Posterior cingulate gyrus (tissue), 11 donors: ENCODE measurements at regions of chr18 and their contacts with region 1.

Region 1: DNA sequence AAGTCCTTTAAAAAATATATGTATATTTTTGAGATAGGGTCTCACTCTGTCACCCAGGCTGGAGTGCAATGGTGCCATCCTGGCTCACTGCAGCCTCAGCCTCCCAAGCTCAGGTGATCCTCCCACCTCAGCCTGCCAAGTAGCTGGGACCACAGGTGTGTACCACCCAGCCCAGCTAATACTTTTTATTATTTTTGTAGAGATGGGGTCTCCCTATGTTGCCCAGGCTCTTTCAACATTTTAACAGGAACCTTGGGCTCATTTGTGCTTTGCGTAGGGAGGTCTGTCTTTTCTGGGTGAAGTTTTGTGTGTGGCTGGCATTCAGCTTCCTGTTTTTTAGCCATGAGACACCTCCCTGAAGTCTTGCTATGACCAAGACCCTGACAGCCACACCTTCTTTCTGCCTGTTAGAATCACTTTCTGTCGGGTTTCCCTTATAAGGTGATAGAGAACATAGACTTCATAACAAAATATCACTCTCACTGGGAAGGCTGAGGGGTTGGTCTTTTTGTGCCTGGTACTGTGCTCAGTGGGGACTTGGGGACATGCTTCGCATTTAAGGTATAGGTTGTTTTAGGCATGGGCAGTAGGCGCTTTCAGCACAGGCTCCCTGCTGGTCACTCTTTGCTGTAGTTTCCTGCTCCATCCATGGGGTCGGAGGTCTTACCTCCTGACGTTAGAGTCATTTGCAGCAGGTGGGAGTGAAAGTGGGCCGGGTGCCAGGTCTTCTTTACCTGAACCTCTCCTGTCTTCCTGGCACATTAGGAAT is 3.4 kb downstream of the RAB31 start:
- DNase-seq: peak in 1 of 10 donors; percentile 35

Region 2: GRCh38 chr18:9743200-9744016 is 31.9 kb after region 1 on chr18:
- intact Hi-C with region 1: no loop called
- DNase-seq: no peak

Region 3: DNA sequence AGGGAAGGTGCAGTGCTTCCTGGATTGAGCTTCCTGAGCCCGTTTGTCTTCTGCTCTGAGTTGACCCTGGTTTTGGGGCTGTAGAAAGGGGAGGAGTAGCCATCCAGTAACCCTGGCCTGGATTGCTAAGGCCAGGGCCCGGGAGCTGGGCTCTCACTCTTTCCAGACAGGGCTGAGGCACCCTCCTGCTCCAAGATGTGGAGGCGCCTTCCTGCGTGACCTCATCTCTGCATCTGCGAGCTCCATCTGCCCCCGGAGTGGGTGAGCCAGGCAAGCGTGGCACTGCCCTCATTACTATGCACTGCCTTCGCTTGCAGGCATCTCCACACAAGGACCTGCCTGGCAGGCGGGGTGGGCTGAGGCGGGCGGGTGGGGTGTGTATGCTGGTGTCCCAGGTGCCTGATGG is 54.5 kb after region 1 on chr18:
- intact Hi-C with region 1: loop called (anchors 10 kb)
- DNase-seq: peak in 2 of 10 donors; percentile 63 to 79